Panc1 (cell line): ENCODE measurements at regions of chr7 and their contacts with region 1.

Region 1: DNA sequence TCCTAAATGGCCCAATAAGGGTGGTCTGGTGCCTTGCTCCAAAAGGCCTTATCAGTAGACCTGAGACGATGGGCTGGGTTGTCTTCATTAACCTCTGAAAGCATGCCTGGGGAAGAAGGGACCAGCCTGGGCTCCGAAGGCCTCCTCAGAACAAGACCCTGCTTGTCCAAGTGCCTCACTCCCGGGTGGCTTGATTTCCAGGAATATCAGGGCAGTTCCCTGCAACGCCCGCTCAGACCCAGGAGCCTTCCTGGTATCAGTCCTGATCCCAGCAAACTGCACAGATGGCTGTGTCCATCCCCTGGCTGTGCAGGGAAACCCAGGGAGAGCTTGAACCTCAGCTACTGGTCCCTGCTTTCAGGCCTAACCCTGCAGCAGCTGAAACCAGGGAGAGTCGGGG is 49.9 kb upstream of the CUX1 start:
- DNase-seq: no peak
- ATAC-seq: peak; percentile 34; the same call in 1 of the 2 replicates
- H3K4me3 ChIP-seq: no peak overlapping the region
- H3K27ac ChIP-seq: no peak overlapping the region
- H3K4me1 ChIP-seq: no peaks in the 10 kb centered on the region
- H3K27me3 ChIP-seq: no peaks in the 10 kb centered on the region
- CTCF ChIP-seq: no peak

Region 2: GRCh38 chr7:101550641-101551541 is 216.7 kb before region 1 on chr7:
- CTCF ChIA-PET with region 1: no interaction called
- POLR2A ChIA-PET with region 1: interaction called, 11 read pairs
- in situ Hi-C with region 1: no loop called
- intact Hi-C with region 1: no loop called
- DNase-seq: no peak
- ATAC-seq: peak; percentile 54; the same call in 1 of the 2 replicates
- H3K4me3 ChIP-seq: no peak overlapping the region
- H3K27ac ChIP-seq: no peak overlapping the region
- H3K4me1 ChIP-seq: no peaks in the 10 kb centered on the region
- H3K27me3 ChIP-seq: no peaks in the 10 kb centered on the region
- CTCF ChIP-seq: no peak

Region 3: DNA sequence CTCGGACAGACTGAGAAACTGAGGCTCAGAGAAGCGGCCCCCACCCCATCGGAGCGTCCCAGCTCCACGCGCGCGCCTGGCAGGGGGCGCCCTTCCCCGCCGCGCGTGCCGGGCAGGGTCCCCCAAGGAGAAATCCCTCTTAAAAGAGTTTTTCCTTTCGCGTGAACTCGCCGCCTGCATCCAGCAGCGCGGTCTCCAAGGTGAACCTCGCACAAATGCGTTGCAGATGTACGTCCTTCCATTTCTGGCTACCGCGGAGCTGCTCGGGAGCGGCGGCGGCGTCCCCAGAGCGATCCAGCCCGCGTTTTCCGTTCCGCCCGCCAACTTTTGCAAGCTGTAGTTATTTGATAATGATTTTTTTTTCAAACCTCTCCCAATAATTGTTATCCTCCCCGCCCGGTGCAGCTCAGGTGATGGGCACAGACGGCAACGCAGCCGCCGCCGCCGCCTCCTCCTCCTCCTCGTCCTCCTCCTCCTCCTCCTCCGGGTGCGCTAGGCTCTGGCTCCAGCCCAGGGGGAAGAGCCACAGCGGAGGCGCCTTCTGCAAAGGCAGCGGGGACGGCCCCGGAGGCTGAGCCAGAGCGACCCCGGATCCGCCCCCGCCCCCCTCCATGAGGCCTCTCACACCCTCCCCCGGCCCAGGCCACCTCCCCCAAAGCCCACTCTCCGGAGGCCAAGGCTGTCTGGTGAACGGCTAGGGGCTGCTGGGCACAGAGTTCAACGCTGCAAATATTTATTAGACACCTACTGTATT is 24.1 kb before region 1 on chr7:
- CTCF ChIA-PET with region 1: no interaction called
- POLR2A ChIA-PET with region 1: interaction called, 11 read pairs
- in situ Hi-C with region 1: no loop called
- intact Hi-C with region 1: no loop called
- DNase-seq: no peak
- ATAC-seq: peak; percentile 83
- H3K4me3 ChIP-seq: peak overlapping the region; percentile 48 to 62
- H3K27ac ChIP-seq: peak overlapping the region; percentile 71
- H3K4me1 ChIP-seq: peaks cover 35% of the 10 kb centered on the region
- H3K27me3 ChIP-seq: no peaks in the 10 kb centered on the region
- CTCF ChIP-seq: peak; percentile 87; the same call in 1 of the 2 replicates

Region 4: DNA sequence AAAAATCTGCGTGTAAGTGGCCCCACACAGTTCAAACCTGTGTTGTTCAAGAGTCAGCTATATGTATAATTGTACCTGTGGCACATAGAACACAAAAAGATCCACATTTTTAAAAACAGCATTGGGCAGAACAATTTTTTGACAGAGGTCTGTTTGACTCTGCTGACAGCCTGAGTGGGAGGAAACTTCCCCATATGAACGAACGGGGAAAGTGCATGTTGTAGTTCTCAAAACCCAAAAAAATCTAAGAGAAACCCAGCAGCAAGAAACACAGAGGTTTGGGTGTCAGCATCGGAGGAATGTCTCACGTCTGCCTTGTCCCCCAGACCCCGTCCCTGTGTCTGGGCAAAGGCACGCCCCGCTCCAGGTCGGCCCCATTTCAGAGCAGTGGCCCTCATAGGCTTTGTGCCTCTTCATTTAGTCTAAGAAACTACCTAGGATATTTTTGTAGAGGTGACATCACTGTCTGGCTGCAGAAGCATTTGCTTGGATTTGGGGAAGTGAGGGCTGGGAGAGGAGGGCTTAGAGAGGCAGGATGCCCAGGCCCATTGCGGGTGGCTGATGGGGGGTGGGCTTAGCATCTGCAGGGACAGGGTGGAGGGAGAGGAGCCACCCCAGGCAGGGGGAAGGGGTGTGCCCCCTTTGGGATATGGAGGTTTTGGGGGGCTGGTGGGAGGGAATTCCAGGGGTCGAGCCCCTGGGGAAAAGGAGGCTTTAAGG is 60.9 kb after region 1 on chr7:
- CTCF ChIA-PET with region 1: no interaction called
- POLR2A ChIA-PET with region 1: no interaction called
- in situ Hi-C with region 1: no loop called
- intact Hi-C with region 1: no loop called
- DNase-seq: no peak
- ATAC-seq: no peak
- H3K4me3 ChIP-seq: no peak overlapping the region
- H3K27ac ChIP-seq: no peak overlapping the region
- H3K4me1 ChIP-seq: no peaks in the 10 kb centered on the region; the same call in 1 of the 2 replicates
- H3K27me3 ChIP-seq: no peaks in the 10 kb centered on the region
- CTCF ChIP-seq: no peak